A673 (cell line): ENCODE measurements at regions of chr3 and their contacts with region 1.

Region 1: DNA sequence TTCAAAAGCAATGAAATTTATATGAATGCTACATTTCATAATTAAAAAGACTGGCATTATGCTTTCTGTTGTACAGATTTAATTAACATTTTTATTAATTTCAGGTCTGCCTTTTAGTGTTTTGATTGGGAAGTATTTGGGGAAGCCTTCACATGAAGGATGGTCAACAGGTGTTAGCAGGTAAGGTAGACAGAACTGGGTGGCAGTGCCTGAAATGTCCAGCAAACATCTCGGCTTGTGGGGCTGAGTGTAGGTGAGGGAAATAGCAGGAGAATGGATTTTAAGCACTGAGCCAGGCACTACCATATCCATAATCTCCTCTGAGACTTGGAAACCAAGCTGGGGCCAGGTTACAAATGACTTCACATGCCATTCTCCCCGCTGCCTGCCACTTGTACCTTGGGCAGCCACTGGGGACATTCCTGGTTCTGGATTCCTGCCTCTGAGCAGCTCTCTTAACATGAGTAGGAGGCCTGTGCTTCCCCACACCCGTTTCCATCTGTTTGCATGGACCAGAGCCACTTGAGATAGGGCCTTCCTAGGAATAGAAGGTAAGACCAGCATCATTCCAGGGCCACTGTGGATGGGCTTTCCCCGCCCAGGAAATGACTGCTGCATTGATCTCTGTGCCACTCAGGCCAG is 125.9 kb upstream of the HES1 start:
- DNase-seq: no peak
- H3K4me3 ChIP-seq: no peak overlapping the region
- H3K27ac ChIP-seq: no peak overlapping the region
- H3K4me1 ChIP-seq: peaks cover 30% of the 10 kb centered on the region
- H3K27me3 ChIP-seq: no peaks in the 10 kb centered on the region
- CTCF ChIP-seq: no peak

Region 2: DNA sequence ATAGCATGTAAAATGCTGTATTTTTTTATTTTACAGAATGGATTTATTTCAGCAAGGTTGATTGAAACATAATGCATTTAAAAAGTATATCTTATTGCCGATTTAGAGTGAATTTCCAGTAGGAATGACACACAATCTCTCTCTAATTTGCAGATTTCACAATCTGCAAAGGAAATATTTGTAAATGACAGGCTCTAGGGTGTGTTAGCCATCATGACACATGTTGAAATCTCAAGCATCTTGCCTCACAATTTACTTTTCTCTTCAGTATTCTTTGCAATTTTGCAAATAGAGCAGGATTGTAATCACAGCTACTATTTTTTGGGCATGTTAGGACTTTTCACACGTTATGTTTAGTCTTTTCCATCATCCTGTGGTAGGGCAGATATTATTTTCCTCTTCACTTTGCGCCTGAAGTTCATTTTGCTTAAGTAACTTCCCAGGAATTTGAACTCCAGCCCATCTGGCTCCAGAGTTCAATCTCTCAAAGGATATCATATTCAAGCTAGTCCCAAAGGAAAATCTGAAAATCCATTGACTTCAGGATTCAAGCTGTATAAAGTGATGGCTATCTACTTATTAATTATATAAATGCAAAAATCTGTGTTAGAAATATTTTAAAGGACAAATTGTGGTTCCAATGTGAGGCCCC is 510.8 kb before region 1 on chr3:
- CTCF ChIA-PET with region 1: no interaction called
- POLR2A ChIA-PET with region 1: no interaction called
- intact Hi-C with region 1: no loop called
- DNase-seq: no peak
- H3K4me3 ChIP-seq: no peak overlapping the region
- H3K27ac ChIP-seq: no peak overlapping the region
- H3K4me1 ChIP-seq: no peaks in the 10 kb centered on the region
- H3K27me3 ChIP-seq: peaks cover 9% of the 10 kb centered on the region
- CTCF ChIP-seq: no peak

Region 3: DNA sequence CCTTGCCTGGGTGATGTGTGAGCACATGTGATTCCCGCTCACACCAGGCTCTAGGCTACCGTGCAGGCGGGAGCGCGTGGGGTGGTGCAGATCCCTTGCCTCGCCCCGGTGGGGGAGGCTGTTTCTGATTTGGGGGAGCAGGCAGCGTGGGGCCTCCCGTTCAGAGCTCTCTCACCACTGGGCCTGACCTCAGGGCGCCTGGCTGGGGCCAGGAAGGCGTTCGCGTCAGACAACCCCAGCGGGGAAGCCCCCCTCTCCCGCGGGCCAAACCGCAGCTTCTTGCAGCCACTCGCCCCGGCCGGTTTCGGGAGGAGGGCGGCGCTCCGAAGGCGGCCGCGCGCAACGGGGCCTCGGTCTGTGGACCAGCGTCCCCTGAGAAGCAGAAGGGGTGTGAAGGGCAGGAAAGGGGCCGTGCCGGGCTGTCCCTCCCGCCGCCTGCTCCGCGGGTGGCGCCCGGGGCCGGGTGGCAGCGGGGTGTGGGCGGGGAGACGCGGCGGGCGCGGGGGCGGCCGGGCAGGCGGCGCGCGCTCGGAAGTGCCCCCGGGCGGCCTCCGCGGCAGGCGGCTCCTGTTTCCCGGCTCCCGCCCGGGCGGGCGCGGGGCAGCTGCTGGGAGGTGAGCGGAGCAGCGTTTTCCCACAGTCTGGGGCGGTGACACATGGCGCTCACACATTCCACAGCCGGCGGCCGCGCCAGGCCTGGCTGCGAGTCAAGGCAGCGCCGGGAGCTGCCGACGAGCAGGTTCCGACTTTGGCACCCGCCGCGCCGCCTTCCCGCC is 60.8 kb after region 1 on chr3:
- CTCF ChIA-PET with region 1: no interaction called
- POLR2A ChIA-PET with region 1: no interaction called
- intact Hi-C with region 1: loop called (anchors 5 kb)
- DNase-seq: peak; percentile 93
- H3K4me3 ChIP-seq: peak overlapping the region; percentile 42
- H3K27ac ChIP-seq: peak overlapping the region; percentile 74
- H3K4me1 ChIP-seq: peaks cover 15% of the 10 kb centered on the region
- H3K27me3 ChIP-seq: no peaks in the 10 kb centered on the region
- CTCF ChIP-seq: no peak